GM23248 (cell line): ENCODE measurements at regions of chr10 and their contacts with region 1.

Region 1: DNA sequence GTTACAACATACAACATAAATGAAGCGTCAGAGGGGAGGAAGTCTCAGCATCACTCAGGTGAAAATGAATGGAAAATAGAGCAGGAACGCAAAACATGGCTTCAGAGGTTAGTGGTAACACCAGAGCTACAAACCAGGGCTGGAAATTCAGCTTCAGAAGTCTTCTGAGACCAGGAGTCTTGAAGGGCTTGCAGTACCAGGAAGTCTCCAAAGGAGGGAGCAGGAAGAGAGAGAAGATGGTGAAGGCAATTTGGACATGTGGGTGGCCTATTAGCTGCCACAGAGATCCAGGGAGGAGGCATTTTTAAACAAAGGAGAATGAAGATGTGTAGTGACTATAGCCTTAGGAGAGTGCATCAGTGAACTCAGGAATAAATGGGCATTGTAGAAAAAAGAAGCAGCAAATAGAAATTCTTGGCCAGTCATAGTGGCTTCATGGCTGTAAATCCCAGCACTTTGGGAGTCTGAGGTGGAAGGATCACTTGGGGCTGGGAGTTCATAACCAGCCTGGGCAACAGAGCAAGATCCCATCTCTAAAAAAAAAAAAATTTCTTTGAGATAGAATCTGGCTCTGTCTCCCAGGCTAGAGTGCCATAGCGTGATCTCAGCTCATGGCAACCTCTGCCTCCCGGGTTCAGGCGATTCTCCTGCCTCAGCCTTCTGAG is 9.3 kb upstream of the TET1 start:
- DNase-seq: peak; percentile 88
- H3K4me3 ChIP-seq: no peak overlapping the region
- H3K27ac ChIP-seq: no peak overlapping the region
- H3K4me1 ChIP-seq: peaks cover 8% of the 10 kb centered on the region
- H3K27me3 ChIP-seq: no peaks in the 10 kb centered on the region

Region 2: DNA sequence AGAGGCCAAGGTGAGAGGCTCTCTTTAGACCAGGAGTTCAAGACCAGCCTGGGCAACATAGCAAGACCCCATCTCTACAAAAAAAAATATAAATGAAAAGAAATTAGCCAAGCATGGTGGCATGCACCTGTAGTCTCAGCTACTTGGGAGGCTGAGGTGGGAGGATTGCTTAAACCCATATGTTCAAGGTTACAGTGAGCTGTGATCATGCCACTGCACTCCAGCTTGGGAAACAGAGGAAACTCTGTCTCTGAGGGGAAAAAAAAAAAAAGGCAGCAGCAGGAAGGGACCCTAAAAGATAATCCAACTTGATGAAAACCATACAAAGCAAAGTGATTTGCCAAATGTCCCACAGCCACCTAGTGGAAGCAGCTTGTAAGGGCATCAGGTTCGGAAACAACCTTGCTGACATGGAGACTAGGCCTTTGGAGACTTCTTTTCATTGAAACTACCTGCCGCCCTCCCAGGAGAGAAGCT is 202.6 kb before region 1 on chr10:
- in situ Hi-C with region 1: no loop called
- DNase-seq: peak; percentile 71
- H3K4me3 ChIP-seq: no peak overlapping the region
- H3K27ac ChIP-seq: no peak overlapping the region
- H3K4me1 ChIP-seq: no peaks in the 10 kb centered on the region
- H3K27me3 ChIP-seq: no peaks in the 10 kb centered on the region

Region 3: GRCh38 chr10:68720793-68721672 is 170.2 kb after region 1 on chr10 and contains the start of gene CCAR1:
- in situ Hi-C with region 1: loop called (anchors 10 kb)
- DNase-seq: peak; percentile 99
- H3K4me3 ChIP-seq: peak within 1 kb of the TSS; percentile 88
- H3K27ac ChIP-seq: peak within 1 kb of the TSS; percentile 84
- H3K4me1 ChIP-seq: peaks cover 9% of the 10 kb centered on the region
- H3K27me3 ChIP-seq: no peaks in the 10 kb centered on the region
- total RNA-seq, gene CCAR1: 32.4 and 37.9 TPM in 2 replicates

Region 4: GRCh38 chr10:69861251-69862240 is 1310.7 kb after region 1 on chr10:
- in situ Hi-C with region 1: no loop called
- DNase-seq: peak; percentile 79
- H3K4me3 ChIP-seq: no peak overlapping the region
- H3K27ac ChIP-seq: no peak overlapping the region
- H3K4me1 ChIP-seq: peaks cover 37% of the 10 kb centered on the region
- H3K27me3 ChIP-seq: no peaks in the 10 kb centered on the region